Adrenal gland (tissue), 19 donors: ENCODE measurements at regions of chr15 and their contacts with region 1.

Region 1: DNA sequence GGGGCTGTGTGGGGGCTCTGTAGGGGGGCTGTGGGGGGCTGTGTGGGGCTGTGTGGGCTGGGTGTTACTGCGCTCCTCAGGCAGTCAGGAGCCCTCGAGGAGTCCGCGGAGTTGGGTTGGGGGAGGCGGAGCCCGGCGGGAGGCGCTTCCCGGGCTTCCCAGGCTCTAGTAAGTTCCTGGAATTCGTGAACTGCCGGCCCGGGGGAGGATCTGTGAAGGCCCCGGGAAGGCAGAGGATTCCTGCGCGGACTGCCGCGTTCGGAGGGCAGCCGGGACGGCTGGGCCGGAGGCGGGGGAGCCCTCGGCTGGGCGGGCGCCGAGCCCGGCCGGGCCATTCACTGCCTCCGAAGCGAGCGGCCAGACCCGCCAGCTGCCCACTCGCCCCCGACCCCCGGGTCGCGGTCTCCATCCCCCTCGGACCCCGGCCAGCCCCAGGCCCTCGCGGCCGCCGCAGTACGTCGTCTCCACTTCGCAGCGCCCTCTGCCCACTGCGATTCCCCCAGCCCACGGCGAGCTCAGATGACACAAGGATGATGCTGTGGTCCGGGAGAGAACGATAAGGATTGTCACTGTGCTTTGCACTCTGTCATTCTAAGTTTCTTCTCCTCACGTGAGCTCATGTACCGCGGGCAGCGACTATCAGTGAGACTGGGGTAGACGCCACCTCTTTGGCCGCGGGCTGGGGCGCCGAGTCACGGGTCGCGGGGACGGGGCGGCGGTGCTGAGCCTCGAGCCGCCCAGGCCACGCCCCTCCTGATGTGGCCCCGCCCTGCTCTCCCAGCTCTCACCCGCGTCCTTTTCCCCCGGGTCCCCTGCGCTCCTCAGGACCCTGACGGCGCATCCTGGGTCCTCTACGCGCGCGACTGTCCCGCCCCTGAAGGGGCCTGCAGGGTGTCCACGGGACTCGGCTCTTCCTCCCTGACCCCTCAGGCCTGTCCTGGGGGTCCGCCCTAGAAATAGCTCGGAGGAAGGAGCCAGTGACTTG is 65.3 kb downstream of the KLF13 start:
- DNase-seq: peak; percentile 80 to 92 (median 83)
- H3K4me3 ChIP-seq: peak overlapping the region; percentile 48 to 70 (median 56)
- H3K27ac ChIP-seq: peak overlapping the region; percentile 60 to 98 (median 85)
- H3K4me1 ChIP-seq: peaks cover 0 to 16% of the 10 kb centered on the region in 2 donors
- H3K27me3 ChIP-seq: no peaks in the 10 kb centered on the region
- CTCF ChIP-seq: no peak
- POLR2A ChIP-seq: peak; percentile 73 to 76

Region 2: DNA sequence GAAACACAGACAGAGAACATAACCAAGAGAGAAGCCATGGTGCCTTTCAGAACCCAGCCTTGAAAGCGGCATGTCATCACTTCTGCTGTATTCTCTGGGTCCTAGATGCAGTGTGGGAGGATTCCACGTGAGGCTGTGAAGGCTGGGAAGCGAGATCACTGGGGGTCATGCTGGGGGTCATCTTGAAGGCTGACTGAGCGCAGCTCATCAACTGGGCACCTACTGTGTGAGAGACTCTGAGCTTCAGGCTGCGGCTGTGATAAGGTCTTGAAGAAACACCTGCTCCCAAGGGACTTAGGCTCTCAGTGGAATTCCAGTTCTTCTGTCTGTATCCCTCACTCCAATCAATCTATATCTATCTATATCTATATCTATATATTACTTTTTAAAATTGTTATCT is 157.2 kb before region 1 on chr15:
- intact Hi-C with region 1: loop called in 1 of 2 experiments (anchors 5 kb)
- DNase-seq: no peak
- H3K4me3 ChIP-seq: no peak overlapping the region
- H3K27ac ChIP-seq: peak overlapping the region in 2 of 5 donors; percentile 16 to 88
- H3K4me1 ChIP-seq: peaks cover 0 to 20% of the 10 kb centered on the region in 2 donors
- H3K27me3 ChIP-seq: no peaks in the 10 kb centered on the region
- CTCF ChIP-seq: no peak
- POLR2A ChIP-seq: no peak

Region 3: GRCh38 chr15:31511707-31512310 is 119.8 kb after region 1 on chr15:
- intact Hi-C with region 1: no loop called
- DNase-seq: no peak
- H3K4me3 ChIP-seq: no peak overlapping the region
- H3K27ac ChIP-seq: no peak overlapping the region
- H3K4me1 ChIP-seq: no peaks in the 10 kb centered on the region
- H3K27me3 ChIP-seq: no peaks in the 10 kb centered on the region
- CTCF ChIP-seq: no peak
- POLR2A ChIP-seq: no peak